Sigmoid colon (tissue), 7 donors: ENCODE measurements at regions of chr3 and their contacts with region 1.

Region 1: GRCh38 chr3:107927361-107928083 is 163.3 kb downstream of the CD47 start:
- DNase-seq: peak; percentile 75
- H3K4me3 ChIP-seq: peak overlapping the region; percentile 38 to 59 (median 55)
- H3K27ac ChIP-seq: peak overlapping the region in 1 of 4 donors; percentile 5
- H3K4me1 ChIP-seq: peaks cover 0 to 11% (median 6%) of the 10 kb centered on the region in 4 donors
- H3K27me3 ChIP-seq: no peaks in the 10 kb centered on the region
- CTCF ChIP-seq: peak; percentile 77 to 94 (median 86)
- EP300 ChIP-seq: no peak
- POLR2A ChIP-seq: no peak

Region 2: GRCh38 chr3:107676469-107677309 is 250.8 kb before region 1 on chr3:
- intact Hi-C with region 1: loop called (anchors 10 kb)
- DNase-seq: no peak
- H3K4me3 ChIP-seq: no peak overlapping the region
- H3K27ac ChIP-seq: no peak overlapping the region
- H3K4me1 ChIP-seq: peaks cover 0 to 56% (median 36%) of the 10 kb centered on the region in 4 donors
- H3K27me3 ChIP-seq: no peaks in the 10 kb centered on the region
- CTCF ChIP-seq: peak in 3 of 4 experiments; percentile 28 to 54 (median 47)
- EP300 ChIP-seq: no peak
- POLR2A ChIP-seq: no peak

Region 3: DNA sequence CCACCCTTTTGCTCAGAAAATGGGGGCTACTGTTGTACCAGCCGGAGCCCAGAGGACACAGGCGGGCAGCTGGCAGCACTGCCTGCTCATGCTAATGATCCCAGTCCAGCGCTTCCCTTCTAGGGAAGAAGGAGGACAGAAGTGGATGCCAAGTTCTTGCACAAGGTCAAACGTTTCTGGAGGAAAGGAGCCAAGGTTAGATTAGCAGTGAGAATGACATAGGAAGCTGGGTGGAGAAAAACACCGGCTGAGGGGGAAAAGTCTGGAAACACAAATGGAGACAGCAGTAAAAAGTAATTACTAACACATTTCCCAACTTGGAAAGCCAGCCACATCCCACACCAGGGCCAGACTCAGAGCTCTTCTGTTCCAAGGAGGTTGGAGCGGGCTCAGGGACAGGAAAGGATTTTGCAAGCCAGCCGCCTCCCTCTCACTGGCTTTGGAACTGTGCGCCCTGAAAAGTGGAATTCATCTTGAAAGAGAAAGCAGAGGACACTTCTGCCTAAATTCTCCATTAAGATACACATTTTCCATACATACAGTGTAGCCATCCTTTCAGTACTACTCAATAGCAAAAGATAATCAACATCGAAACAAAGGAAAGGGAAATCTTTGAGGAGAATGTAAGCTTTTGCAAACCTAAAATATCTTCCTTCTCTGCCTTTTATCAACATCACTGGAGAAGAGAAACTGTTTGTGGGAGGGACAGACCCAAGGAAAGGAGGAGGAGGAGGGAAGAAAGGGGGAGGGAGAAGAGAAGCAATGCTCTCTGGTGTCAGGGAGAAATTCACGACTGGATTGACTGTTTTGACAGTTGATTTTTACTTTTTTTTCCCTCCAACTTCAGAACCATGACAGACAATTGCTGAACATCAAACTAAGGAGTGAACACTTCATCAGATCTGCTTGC is 29.7 kb after region 1 on chr3:
- intact Hi-C with region 1: loop called (anchors 1 kb)
- DNase-seq: peak; percentile 96
- H3K4me3 ChIP-seq: peak overlapping the region in 3 of 4 donors; percentile 18 to 40 (median 33)
- H3K27ac ChIP-seq: peak overlapping the region; percentile 74 to 86 (median 81)
- H3K4me1 ChIP-seq: peaks cover 0 to 29% (median 19%) of the 10 kb centered on the region in 4 donors
- H3K27me3 ChIP-seq: no peaks in the 10 kb centered on the region
- CTCF ChIP-seq: no peak
- EP300 ChIP-seq: peak in 1 of 4 donors; percentile 41
- POLR2A ChIP-seq: no peak

Region 4: DNA sequence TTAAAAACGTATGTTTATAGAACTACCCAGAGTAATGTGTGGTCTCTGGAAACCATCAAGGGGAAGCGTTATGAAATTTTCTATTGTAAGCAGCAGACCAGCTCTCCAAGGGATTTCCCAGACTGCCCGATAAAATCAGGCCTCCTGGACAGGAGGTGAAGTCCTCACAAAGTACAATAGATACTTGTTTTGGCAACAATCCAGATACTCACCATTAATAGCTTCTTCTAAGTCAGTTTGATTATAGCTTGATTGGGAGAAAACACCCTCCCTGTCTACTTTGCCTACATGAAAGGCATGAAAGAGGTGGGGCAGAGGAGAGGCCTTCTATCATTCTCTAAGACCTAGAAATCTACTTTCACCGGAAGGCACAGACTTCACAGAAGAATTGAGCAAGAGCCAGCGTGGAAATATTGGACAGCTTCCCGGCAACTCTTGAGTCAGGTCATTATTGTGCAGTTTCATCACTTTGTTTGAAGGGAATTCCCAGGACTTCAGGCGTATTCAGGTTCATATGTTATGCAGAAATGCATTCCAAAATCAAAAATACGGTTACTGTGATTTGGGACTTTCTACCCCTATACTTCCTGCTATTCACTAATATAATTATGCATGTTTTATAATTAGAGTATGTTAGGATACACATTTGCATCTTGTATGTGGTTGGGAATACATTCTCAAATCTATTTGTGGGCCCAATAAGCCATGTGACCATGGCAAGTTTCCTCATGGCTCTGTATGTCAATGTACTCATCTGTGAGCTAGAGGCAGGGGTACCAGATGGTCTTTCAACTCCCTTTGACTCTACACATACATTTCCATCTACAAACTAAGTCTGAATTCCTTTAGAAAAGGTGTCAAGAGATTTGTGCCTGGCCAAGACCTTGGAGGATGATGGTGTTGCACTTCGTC is 59.8 kb after region 1 on chr3:
- intact Hi-C with region 1: loop called (anchors 5 kb)
- DNase-seq: peak; percentile 94
- H3K4me3 ChIP-seq: no peak overlapping the region
- H3K27ac ChIP-seq: peak overlapping the region; percentile 71 to 78 (median 76)
- H3K4me1 ChIP-seq: peaks cover 0 to 38% (median 32%) of the 10 kb centered on the region in 4 donors
- H3K27me3 ChIP-seq: no peaks in the 10 kb centered on the region
- CTCF ChIP-seq: no peak
- EP300 ChIP-seq: peak in 1 of 4 donors; percentile 41
- POLR2A ChIP-seq: no peak

Region 5: DNA sequence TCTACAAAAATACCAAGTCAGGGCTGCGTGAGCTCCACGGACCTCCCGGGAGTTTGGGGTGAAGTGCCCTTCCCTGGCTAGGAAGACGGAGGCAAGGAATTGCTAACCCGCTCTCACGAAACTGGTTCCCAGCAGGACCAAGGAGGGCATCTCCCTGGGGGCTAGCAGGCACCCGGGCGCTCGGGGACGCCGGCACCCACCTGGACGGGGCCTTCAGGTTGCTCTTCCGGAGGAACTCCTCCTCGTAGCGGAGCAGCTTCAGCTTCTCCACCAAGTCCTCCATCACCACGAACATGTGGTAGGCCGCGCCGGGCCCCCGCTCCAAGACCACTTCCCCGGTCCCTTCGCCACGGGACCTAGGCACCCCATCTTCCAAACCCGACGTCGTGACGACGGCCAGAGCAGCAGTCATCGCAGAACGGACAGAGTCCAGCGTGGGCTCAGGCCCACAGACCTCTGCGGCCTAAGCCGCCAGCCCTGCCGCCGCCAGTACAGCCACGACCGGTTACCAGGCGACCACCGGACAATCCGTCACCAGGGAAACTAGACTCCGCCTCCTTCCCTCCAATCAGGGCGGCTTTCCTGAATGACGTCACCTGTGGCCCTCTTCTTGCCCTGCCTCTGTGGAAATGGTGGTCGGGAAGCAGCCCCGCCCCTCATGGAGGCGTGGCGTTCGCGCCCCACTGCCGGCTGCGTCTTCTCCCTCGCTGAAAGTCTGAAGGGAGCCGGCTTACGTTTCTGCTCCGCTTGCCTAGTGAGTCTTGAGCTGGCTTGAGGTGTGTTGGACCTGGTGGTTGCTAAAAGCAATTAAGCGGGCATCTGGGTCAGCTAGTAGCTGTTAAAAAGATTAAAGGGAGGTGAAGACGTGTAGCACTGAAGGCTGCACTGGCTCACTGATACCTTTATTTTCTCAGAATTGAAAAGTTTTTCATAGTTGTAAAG is 294.7 kb after region 1 on chr3 and contains the start of gene IFT57:
- intact Hi-C with region 1: loop called (anchors 5 kb)
- DNase-seq: peak; percentile 99
- H3K4me3 ChIP-seq: peak within 1 kb of the TSS; percentile 78 to 86 (median 82)
- H3K27ac ChIP-seq: peak within 1 kb of the TSS; percentile 80 to 84 (median 82)
- H3K4me1 ChIP-seq: peaks cover 0 to 33% (median 19%) of the 10 kb centered on the region in 4 donors
- H3K27me3 ChIP-seq: no peaks in the 10 kb centered on the region
- CTCF ChIP-seq: no peak
- EP300 ChIP-seq: no peak
- POLR2A ChIP-seq: peak; percentile 26 to 57
- total RNA-seq, gene IFT57: 38.8 to 49.6 (median 44.0) TPM